Activated B cell treated with CpG ODN at 0.5 μM for 24 hours (primary cell): ENCODE measurements at regions of chr6 and their contacts with region 1.

Region 1: DNA sequence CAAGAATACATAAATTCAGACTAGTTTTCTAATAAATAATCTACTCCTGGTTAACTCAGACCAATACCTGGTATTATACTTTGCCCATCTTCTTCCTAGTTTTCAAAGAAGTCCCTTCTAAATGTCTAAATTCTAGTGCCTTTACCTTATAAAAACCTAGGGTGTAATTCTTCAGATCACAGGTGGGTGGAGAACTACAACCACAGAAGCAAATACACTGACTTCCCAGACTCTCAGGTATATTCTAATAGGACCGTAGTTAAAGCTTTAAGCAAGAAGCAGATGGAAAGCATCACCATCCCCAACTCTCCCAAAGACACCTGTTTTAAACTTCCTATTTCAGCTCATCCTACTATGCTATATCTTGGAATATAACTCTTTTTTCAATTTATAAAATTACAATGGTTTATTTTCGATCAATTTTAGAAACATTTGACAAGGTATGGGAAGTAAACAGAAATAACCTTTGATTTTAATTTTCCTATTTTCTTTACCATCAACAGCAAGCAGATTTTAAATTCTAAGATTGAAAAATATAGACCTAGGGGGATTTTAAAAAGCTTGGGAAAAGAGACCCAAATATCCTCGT is 15.8 kb downstream of the MAN1A1 start:
- DNase-seq: no peak
- ATAC-seq: peak; percentile 71
- H3K4me3 Mint-ChIP-seq: no peak overlapping the region
- H3K27ac Mint-ChIP-seq: no peak overlapping the region
- H3K4me1 Mint-ChIP-seq: peaks cover 40% of the 10 kb centered on the region
- H3K27me3 Mint-ChIP-seq: no peaks in the 10 kb centered on the region
- CTCF ChIP-seq: no peak

Region 2: DNA sequence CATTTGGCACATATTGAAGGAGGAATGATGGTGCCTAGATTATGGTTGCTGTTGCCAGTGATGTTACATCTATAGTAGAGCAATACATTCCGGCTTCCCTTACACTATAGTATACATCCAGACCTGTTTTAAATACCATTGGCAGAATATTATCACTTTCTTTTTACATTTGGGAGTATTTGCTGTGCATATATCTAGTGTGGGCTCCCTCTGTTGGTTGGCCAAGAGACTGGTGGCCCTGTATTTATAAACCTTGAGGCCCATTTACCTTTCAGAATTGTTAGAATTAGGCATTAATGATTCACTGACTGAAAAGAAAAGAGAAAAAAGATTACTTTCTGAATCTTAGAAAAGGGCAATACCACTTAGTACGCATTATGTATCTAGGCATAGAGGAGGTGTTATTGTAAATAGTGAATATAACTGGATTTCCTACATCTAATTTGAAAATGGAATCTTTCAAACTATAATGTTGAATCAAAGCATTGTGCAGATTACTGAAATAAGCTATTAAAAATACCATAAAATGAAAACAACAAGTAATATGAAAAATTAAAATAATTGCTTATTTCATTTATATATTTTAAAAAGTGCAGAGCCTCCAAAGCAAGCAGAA is 644.6 kb after region 1 on chr6:
- CTCF ChIA-PET with region 1: interaction called, 8 read pairs
- POLR2A ChIA-PET with region 1: no interaction called
- intact Hi-C with region 1: loop called (anchors 1 kb)
- DNase-seq: no peak
- ATAC-seq: peak; percentile 52
- H3K4me3 Mint-ChIP-seq: no peak overlapping the region
- H3K27ac Mint-ChIP-seq: no peak overlapping the region
- H3K4me1 Mint-ChIP-seq: no peaks in the 10 kb centered on the region
- H3K27me3 Mint-ChIP-seq: no peaks in the 10 kb centered on the region
- CTCF ChIP-seq: peak; percentile 21

Region 3: GRCh38 chr6:120056085-120056484 is 722.3 kb after region 1 on chr6:
- CTCF ChIA-PET with region 1: no interaction called
- POLR2A ChIA-PET with region 1: no interaction called
- intact Hi-C with region 1: loop called (anchors 10 kb)
- DNase-seq: no peak
- ATAC-seq: no peak
- H3K4me3 Mint-ChIP-seq: no peak overlapping the region
- H3K27ac Mint-ChIP-seq: no peak overlapping the region
- H3K4me1 Mint-ChIP-seq: no peaks in the 10 kb centered on the region
- H3K27me3 Mint-ChIP-seq: no peaks in the 10 kb centered on the region
- CTCF ChIP-seq: no peak

Region 4: DNA sequence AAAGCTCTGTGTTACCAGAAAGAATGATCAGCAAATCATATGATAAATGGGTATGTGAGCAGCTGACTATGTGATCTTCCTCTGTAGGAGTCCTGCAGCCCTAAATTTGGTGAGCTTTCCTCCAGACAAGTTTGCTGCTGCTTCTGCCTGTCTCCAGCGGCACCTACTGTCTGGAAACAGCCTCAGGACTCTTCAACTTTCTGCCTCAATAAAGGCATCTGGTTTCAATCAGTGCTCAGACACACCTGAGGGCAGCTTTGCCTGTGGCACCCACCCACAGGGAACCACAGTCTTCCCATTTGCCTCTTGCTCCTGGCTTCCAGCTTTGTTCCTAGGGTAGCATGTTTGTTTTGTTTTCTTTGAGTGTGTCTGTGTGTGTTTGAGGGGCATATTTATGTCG is 743.7 kb after region 1 on chr6:
- CTCF ChIA-PET with region 1: no interaction called
- POLR2A ChIA-PET with region 1: no interaction called
- intact Hi-C with region 1: loop called (anchors 1 kb)
- DNase-seq: no peak
- ATAC-seq: no peak
- H3K4me3 Mint-ChIP-seq: no peak overlapping the region
- H3K27ac Mint-ChIP-seq: no peak overlapping the region
- H3K4me1 Mint-ChIP-seq: no peaks in the 10 kb centered on the region
- H3K27me3 Mint-ChIP-seq: no peaks in the 10 kb centered on the region
- CTCF ChIP-seq: no peak

Region 5: GRCh38 chr6:120274547-120274946 is 940.7 kb after region 1 on chr6:
- CTCF ChIA-PET with region 1: no interaction called
- POLR2A ChIA-PET with region 1: no interaction called
- intact Hi-C with region 1: loop called (anchors 2 kb)
- DNase-seq: no peak
- ATAC-seq: peak; percentile 34
- H3K4me3 Mint-ChIP-seq: no peak overlapping the region
- H3K27ac Mint-ChIP-seq: peak overlapping the region; percentile 75
- H3K4me1 Mint-ChIP-seq: peaks cover 19% of the 10 kb centered on the region
- H3K27me3 Mint-ChIP-seq: no peaks in the 10 kb centered on the region
- CTCF ChIP-seq: no peak

Region 6: GRCh38 chr6:120826253-120826652 is 1492.5 kb after region 1 on chr6:
- CTCF ChIA-PET with region 1: no interaction called
- POLR2A ChIA-PET with region 1: no interaction called
- intact Hi-C with region 1: loop called (anchors 2 kb)
- DNase-seq: no peak
- ATAC-seq: no peak
- H3K4me3 Mint-ChIP-seq: no peak overlapping the region
- H3K27ac Mint-ChIP-seq: no peak overlapping the region
- H3K4me1 Mint-ChIP-seq: no peaks in the 10 kb centered on the region
- H3K27me3 Mint-ChIP-seq: no peaks in the 10 kb centered on the region
- CTCF ChIP-seq: no peak